Dorsolateral prefrontal cortex (tissue), 120 donors: ENCODE measurements at regions of chr2 and their contacts with region 1.

Region 1: DNA sequence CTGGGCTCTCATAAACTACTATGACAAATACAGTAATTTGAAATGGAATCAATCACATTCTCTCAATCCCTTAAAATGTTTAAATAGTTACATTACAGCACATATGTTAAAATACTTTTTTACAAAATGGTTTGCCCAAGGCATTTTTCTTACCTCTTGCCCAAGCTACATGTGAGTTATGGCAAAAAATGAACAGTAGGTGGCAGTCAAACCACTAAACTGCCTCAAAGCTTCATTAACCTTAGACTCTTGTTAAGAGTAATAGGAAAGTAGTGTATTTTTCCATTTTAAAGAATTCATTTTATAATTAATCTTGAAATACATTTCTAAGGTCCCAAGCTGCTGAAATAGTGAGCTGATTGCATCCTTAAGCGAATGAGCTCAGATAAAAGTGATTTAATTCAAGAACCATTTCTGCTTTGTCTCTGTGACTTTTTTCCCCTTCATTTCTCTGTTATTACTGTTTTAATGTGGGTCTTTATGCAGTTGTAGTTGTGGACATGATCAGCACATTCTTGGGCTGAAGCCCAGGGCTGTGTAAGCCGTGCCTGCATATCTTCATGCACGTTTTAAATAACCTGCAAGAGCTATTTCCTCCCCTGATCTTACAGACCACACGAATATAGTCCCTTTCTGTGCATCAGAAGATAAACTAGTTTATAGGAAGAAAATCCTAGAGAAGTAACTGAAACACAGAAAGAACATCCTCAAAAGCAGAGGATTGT is 311.8 kb downstream of the LNPK start:
- DNase-seq: peak in 2 of 10 donors; percentile 15 to 21
- H3K4me3 ChIP-seq: no peak overlapping the region
- H3K27ac ChIP-seq: no peak overlapping the region
- H3K27me3 ChIP-seq: peaks cover 0 to 66% (median 24%) of the 10 kb centered on the region in 45 donors
- CTCF ChIP-seq: peak in 55 of 56 donors; percentile 51 to 97 (median 81)

Region 2: DNA sequence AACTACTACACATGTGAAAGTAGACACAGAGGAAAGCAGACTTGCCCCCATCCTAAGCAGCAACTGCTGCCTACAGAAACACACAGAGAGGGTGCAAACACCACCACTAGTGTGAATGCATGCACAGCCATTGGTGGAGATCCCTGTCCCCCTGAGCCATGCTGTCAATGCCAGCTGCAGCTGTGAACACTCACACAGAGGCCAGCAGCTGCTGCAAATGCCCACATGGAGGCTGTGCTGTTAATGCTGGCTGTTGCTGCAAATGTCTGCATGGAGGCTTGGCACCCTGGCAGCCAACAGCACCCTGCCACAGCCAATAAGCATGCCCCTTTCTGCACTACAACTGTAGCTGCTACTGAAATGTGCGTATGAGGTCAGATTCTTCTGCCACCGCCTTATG is 43.2 kb before region 1 on chr2:
- intact Hi-C with region 1: no loop called
- DNase-seq: no peak
- H3K4me3 ChIP-seq: no peak overlapping the region
- H3K27ac ChIP-seq: no peak overlapping the region
- H3K27me3 ChIP-seq: peaks cover 0 to 10% (median 0%) of the 10 kb centered on the region in 45 donors
- CTCF ChIP-seq: no peak

Region 3: GRCh38 chr2:175734679-175735078 is 44.4 kb after region 1 on chr2:
- intact Hi-C with region 1: no loop called
- DNase-seq: peak in 1 of 10 donors; percentile 27
- H3K4me3 ChIP-seq: no peak overlapping the region
- H3K27ac ChIP-seq: no peak overlapping the region
- H3K27me3 ChIP-seq: peaks cover 0 to 4% (median 0%) of the 10 kb centered on the region in 45 donors
- CTCF ChIP-seq: no peak

Region 4: GRCh38 chr2:176001916-176002687 is 311.8 kb after region 1 on chr2 and contains the start of gene LNPK:
- intact Hi-C with region 1: no loop called
- DNase-seq: peak; percentile 88 to 96 (median 92)
- H3K4me3 ChIP-seq: peak within 1 kb of the TSS; percentile 60 to 97 (median 85)
- H3K27ac ChIP-seq: peak within 1 kb of the TSS; percentile 59 to 97 (median 89)
- H3K27me3 ChIP-seq: no peaks in the 10 kb centered on the region
- CTCF ChIP-seq: peak in 32 of 56 donors; percentile 1 to 64 (median 26)
- total RNA-seq, gene LNPK: 29.0 to 89.5 (median 60.4) TPM

Region 5: DNA sequence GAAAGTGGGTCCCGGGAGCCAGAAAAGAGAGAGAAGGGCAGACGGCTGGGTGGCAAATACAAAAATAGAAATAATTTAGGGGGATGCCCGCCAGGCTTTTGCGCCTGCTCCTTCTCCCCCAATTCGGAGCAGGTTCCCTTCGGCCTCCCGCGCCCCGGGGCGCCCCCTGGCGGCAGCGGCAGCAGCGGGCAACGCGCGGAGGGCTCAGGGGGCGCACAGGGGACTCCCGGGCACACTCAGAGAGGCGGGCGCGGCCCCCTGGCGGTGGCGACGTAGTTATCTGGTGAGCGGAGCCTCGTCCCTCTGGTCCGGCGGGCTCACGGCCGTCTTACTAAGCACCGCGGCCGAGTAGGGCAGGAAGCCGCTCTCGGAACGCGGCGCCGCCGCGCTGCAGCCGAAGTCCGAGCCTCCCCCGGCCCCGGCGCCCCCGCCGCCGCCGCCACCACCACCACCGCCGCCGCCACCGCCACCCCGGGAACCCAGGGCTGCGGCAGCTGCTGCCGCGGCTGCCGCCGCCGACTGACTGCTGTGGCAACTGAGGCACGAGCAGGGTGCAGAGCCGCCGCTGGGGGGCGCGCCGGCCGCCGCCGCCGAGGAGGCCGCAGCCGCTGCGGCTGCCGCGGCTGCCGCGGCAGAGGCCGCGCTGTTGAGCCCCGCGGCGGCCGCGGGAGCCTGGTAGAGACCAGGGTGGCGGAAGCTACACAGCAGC is 389.7 kb after region 1 on chr2:
- intact Hi-C with region 1: loop called in 1 of 2 experiments (anchors 5 kb)
- DNase-seq: no peak
- H3K4me3 ChIP-seq: peak overlapping the region in 5 of 59 donors; percentile 12 to 26 (median 18)
- H3K27ac ChIP-seq: no peak overlapping the region
- H3K27me3 ChIP-seq: peaks cover 29 to 100% (median 97%) of the 10 kb centered on the region in 45 donors
- CTCF ChIP-seq: peak in 44 of 56 donors; percentile 13 to 53 (median 38)